ENCODE measurements at regions of chr9 and their contacts with region 1.

Region 1: DNA sequence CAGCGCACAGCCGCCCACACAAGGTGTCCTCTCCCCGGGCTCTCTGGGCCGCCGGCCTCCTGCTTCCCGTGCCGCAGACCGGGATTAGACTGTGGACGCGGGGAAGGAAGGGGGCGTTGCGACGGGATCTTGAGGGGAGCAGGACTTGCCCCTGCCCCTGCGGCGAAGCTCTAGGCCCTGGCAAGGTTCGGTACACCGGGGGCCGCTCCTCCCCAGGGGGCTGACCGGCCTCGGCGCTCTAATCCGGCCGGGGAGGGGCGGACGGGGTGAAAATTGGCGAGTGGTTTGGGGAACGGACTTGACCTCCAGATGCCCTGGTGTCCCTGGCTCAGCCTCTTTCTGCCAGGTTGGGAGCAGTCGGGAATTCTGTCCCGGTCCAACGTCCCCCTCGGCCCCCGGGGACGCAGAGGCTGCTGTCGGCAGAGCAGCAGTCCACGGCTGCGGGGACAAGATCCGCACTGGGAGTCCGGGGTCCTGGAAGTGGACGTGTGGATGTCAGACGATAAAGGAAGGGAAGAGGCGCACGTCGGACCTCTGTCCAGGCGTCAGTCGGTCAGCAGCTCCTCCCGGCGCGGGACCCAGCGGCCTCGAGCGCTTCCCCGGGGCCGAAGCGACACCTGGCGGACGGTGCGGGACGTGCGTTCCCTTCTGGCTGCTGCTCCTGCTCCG is 1.9 kb upstream of the CNTFR start:
- DNase-seq: peak; percentile 67
- H3K4me3 Mint-ChIP-seq: no peak overlapping the region
- H3K27ac Mint-ChIP-seq: no peak overlapping the region
- H3K4me1 Mint-ChIP-seq: peaks cover 2% of the 10 kb centered on the region
- H3K27me3 Mint-ChIP-seq: peaks cover 69% of the 10 kb centered on the region

Region 2: DNA sequence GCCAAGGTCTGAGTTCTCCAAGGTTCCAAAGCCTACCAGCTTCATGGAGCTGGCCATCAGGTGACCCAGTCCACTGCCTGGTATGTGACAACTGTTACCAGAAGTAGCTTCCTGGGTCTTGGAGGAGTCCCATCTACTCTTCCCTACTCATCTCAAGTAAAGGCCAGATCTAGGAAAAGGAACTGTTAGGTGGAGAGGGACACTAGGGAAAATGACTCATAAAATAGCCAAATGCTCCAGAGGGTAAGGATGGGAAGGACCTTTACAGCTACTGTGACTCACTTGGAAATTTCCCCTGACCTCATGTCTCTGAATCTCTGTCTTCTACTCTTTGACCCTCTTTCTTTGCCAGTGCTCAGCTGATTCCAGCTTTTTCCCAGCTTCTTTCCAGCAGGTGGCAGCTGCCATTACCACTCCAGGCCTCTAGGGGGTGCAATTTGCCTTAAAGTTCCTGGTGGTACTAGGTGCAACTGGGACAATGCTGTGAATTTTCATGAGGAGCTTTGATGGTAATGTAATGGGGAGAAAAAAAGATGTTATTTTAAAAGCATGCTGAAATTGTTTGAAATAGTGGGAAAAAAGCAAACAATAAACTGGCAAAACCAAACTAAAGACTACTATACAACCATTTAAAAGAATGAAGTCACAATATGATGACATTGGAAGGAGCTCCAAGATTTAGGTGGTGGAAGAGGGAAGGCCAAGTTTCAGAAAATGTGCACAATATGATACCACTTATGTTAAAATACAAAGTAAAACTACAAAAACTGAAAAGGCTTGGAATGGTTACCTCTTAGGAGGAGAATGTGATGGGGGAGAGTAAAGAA is 187.6 kb before region 1 on chr9:
- intact Hi-C with region 1: loop called (anchors 5 kb)
- DNase-seq: peak; percentile 25
- H3K4me3 Mint-ChIP-seq: no peak overlapping the region
- H3K27ac Mint-ChIP-seq: no peak overlapping the region
- H3K4me1 Mint-ChIP-seq: no peaks in the 10 kb centered on the region
- H3K27me3 Mint-ChIP-seq: no peaks in the 10 kb centered on the region

Region 3: DNA sequence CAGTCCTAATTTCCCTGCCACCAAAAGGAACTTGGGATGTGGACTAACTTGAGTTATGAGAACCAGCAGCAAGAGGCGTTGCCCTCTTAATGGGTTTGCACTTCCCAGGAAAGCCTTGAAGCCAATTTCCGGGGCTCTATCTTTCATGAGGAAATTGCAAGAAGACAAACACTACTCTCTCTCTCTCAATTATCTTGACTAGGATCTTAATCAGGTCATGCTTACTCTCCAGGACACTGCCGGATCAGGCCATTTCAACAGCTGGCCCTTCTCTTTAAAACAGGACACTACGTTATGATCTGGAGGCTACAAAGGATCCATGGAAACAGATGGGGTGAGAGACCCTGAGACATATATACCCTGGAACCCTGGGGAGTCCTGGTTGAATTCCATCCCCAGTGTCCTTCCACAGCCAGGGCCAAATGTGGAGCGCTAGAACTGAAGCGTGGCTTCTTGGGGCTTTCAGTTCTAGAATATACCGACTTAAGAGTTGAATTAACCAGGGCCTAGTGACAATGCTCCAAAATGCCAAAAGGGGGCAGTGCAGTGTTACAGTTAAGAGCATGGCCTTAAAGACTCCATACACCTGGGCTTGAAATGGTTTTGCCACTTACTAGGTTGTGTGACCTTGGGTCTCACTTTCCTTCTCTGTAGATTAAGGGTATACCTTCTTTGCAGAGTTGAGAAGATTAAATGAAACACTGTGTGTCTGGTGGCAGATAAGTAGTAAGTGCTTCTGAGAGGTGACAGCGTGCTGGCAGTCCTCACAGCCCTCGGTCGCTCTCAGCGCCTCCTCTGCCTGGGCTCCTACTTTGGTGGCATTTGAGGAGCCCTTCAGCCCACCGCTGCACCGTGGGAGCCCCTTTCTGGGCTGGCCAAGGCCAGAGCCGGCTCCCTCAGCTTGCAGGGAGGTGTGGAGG is 154.1 kb before region 1 on chr9:
- intact Hi-C with region 1: loop called (anchors 5 kb)
- DNase-seq: peak; percentile 38
- H3K4me3 Mint-ChIP-seq: no peak overlapping the region
- H3K27ac Mint-ChIP-seq: no peak overlapping the region
- H3K4me1 Mint-ChIP-seq: no peaks in the 10 kb centered on the region
- H3K27me3 Mint-ChIP-seq: no peaks in the 10 kb centered on the region

Region 4: GRCh38 chr9:34500623-34501267 is 90.6 kb before region 1 on chr9:
- intact Hi-C with region 1: loop called (anchors 5 kb)
- DNase-seq: peak; percentile 60
- H3K4me3 Mint-ChIP-seq: no peak overlapping the region
- H3K27ac Mint-ChIP-seq: no peak overlapping the region
- H3K4me1 Mint-ChIP-seq: peaks cover 15% of the 10 kb centered on the region
- H3K27me3 Mint-ChIP-seq: no peaks in the 10 kb centered on the region

Region 5: GRCh38 chr9:34546834-34547827 is 44.3 kb before region 1 on chr9:
- intact Hi-C with region 1: loop called (anchors 2 kb)
- DNase-seq: peak; percentile 18
- H3K4me3 Mint-ChIP-seq: no peak overlapping the region
- H3K27ac Mint-ChIP-seq: no peak overlapping the region
- H3K4me1 Mint-ChIP-seq: no peaks in the 10 kb centered on the region
- H3K27me3 Mint-ChIP-seq: peaks cover 13% of the 10 kb centered on the region

Region 6: DNA sequence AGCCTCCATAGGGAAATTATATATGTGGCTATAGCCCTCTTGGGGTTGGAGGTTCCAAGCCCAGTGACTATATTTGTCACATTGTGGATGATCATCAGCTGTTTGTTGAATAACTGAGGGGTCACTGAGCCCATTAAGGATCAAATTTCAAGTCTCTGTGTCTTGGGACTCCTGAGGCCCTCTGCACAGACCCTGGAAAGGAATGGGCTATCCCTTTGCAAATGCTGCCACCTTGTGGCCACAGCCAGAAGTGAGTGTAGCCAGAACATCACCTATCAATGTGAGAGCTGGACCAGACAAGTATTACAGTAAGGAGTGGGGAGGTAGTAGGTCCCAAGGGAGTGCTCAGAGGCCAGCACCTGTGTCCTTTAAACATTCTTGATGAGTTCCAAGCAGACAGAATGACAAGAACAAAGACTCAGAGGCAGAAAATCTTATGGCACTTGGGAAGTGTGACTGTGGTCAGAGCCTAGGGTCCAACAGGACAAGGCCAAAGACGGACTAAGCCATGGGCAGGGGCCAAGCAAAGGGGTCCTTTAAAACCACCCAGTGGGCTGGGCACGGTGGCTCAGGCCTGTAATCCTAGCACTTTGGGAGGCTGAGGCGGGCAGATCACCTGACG is 12.3 kb after region 1 on chr9:
- intact Hi-C with region 1: no loop called
- DNase-seq: peak; percentile 66
- H3K4me3 Mint-ChIP-seq: no peak overlapping the region
- H3K27ac Mint-ChIP-seq: no peak overlapping the region
- H3K4me1 Mint-ChIP-seq: no peaks in the 10 kb centered on the region
- H3K27me3 Mint-ChIP-seq: peaks cover 16% of the 10 kb centered on the region

Region 7: GRCh38 chr9:34620061-34620994 is 28.9 kb after region 1 on chr9 and contains the start of gene DCTN3:
- intact Hi-C with region 1: loop called (anchors 2 kb)
- DNase-seq: peak; percentile 90
- H3K4me3 Mint-ChIP-seq: peak within 1 kb of the TSS; percentile 91
- H3K27ac Mint-ChIP-seq: peak within 1 kb of the TSS; percentile 46
- H3K4me1 Mint-ChIP-seq: peaks cover 16% of the 10 kb centered on the region
- H3K27me3 Mint-ChIP-seq: peaks cover 26% of the 10 kb centered on the region
- total RNA-seq, gene DCTN3: 57.8 and 65.5 TPM in 2 replicates

Measured in activated T-helper 2 cell treated with anti-CD3 and anti-CD28 coated beads, Interferon-gamma antibody, Interleukin-2, Interleukin-4, amounts not matched to agents 10 μg/mL and 5 μg/mL and 100 μg/mL, durations not matched to agents 14 hours and 24 hours and 36 hours (primary cell).